Sciatic nerve (tissue), 2 donors: ENCODE measurements at regions of chr19 and their contacts with region 1.

Region 1: DNA sequence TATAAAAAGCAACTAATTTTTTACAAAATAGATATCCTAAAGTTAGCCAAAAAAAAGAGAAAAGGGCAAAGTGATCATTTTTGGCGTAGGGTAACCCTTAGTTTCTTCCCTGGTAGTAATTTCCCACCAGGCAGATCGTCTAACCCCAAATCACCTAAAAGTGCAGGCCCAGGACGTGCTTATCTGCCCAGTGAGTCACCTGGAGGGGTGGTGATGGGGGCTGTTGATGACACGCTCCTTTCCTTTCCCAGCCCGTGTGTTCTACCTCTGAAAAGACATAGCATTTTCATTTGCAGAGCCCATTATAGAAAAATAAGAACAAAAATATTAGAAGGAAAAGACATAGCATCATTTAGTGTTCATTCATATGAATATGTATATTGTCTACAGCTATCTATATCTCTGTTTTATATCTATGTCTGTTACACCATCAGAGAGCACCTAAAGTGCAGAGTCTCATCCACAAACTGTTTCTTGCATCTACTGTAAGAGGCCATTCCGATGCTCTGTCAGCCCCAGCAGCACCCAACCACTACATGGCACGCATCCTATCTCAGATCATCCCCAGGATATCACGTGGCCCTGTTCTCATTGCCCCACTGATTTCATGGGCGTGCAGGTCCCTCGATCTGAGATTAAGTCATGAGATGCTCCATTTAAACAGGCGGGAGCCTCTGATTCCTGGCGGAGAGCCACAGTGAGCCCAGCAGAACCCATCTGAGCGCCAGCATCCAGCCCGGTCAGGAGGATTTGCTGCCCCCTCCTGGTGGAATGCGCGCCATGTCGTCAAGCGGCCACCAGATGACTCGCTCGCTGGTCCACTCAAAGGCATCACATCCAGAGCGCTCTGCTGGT is 8.5 kb upstream of the LILRB3 start:
- DNase-seq: peak; percentile 93
- ATAC-seq: peak; percentile 94

Region 2: GRCh38 chr19:54179921-54180461 is 51.3 kb before region 1 on chr19:
- intact Hi-C with region 1: loop called (anchors 10 kb)
- DNase-seq: no peak
- ATAC-seq: peak; percentile 71

Region 3: DNA sequence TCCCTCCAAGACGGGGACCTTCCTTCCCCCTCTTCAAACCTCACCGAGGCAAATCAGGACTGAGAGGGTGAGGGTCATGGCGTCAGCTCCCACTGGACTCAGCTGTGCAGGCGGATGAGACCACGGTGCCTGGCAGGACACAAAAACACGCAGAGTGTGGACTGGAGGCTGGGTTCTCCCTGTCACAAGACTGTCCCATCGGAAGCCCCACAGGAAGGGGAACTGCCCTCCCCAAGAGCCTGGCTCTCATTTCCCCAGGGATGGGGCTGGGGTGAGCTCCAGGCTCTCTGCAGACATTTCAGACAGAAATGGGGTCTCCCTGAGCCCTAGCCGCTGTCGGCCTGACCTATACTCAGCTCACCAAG is 25.8 kb after region 1 on chr19 and contains the start of gene LILRB5:
- intact Hi-C with region 1: no loop called
- DNase-seq: no peak
- ATAC-seq: peak; percentile 65
- total RNA-seq, gene LILRB5: 24.1 TPM